ENCODE measurements at regions of chr10 and their contacts with region 1.

Region 1: GRCh38 chr10:22704471-22704911 is 9.9 kb downstream of the PIP4K2A start:
- DNase-seq: no peak
- ATAC-seq: peak in 3 of 8 donors; percentile 31 to 42 (median 36)
- H3K4me3 ChIP-seq: no peak overlapping the region
- H3K27ac ChIP-seq: peak overlapping the region in 1 of 10 donors; percentile 62
- H3K4me1 ChIP-seq: peaks cover 0 to 65% (median 0%) of the 10 kb centered on the region in 9 donors
- H3K27me3 ChIP-seq: no peaks in the 10 kb centered on the region
- CTCF ChIP-seq: no peak

Region 2: GRCh38 chr10:22573820-22574569 is 130.5 kb before region 1 on chr10:
- intact Hi-C with region 1: no loop called
- DNase-seq: peak in 1 of 2 donors; percentile 20
- ATAC-seq: peak in 2 of 8 donors; percentile 42 to 45
- H3K4me3 ChIP-seq: no peak overlapping the region
- H3K27ac ChIP-seq: peak overlapping the region in 1 of 10 donors; percentile 39
- H3K4me1 ChIP-seq: peaks cover 0 to 15% (median 0%) of the 10 kb centered on the region in 9 donors
- H3K27me3 ChIP-seq: no peaks in the 10 kb centered on the region
- CTCF ChIP-seq: peak in 8 of 9 donors; percentile 28 to 75 (median 50)

Region 3: DNA sequence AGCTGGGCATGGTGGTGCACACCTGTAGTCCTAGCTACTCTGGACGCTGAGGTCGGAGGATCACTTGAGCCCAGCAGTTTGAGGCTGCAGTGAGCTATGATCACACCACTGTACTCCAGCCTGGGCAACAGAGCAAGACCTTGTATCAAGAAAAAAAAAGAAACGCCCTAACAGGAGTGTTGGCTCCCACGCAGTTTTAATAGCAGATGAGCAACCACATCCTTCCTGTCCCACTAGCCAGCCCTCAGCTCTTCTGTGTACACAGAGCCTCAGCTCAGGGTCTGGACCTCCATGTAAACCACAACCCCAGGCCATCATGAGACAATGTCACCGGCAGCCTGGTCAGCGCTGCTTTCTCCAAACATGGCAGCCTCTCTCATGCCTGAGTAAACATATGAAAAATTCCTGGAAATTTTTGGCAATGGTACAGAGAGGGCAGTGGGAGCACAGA is 98.3 kb before region 1 on chr10:
- intact Hi-C with region 1: loop called in 2 of 10 experiments (anchors 10 kb)
- DNase-seq: no peak
- ATAC-seq: peak; percentile 28 to 75 (median 68)
- H3K4me3 ChIP-seq: no peak overlapping the region
- H3K27ac ChIP-seq: peak overlapping the region in 1 of 10 donors; percentile 86
- H3K4me1 ChIP-seq: peaks cover 0 to 73% (median 5%) of the 10 kb centered on the region in 9 donors
- H3K27me3 ChIP-seq: no peaks in the 10 kb centered on the region
- CTCF ChIP-seq: no peak

Region 4: GRCh38 chr10:22672533-22673392 is 31.7 kb before region 1 on chr10:
- intact Hi-C with region 1: loop called in 1 of 10 experiments (anchors 1 kb)
- DNase-seq: no peak
- ATAC-seq: no peak
- H3K4me3 ChIP-seq: no peak overlapping the region
- H3K27ac ChIP-seq: no peak overlapping the region
- H3K4me1 ChIP-seq: peaks cover 0 to 90% (median 16%) of the 10 kb centered on the region in 9 donors
- H3K27me3 ChIP-seq: no peaks in the 10 kb centered on the region
- CTCF ChIP-seq: no peak